ENCODE measurements at regions of chr2 and their contacts with region 1.

Region 1: GRCh38 chr2:25991965-25992364 is 9.7 kb upstream of the KIF3C start:
- DNase-seq: no peak
- ATAC-seq: peak; percentile 47
- H3K4me3 ChIP-seq: no peak overlapping the region
- H3K27ac ChIP-seq: no peak overlapping the region
- H3K4me1 ChIP-seq: peaks cover 37% of the 10 kb centered on the region
- H3K27me3 ChIP-seq: peaks cover 0 to 1% of the 10 kb centered on the region in 2 experiments; a peak in 1 of 5 replicates
- CTCF ChIP-seq: no peak
- EP300 ChIP-seq: no peak
- POLR2A ChIP-seq: no peak
- RAD21 ChIP-seq: no peak

Region 2: GRCh38 chr2:26072925-26073768 is 81.2 kb after region 1 on chr2:
- CTCF ChIA-PET with region 1: no interaction called
- POLR2A ChIA-PET with region 1: no interaction called
- in situ Hi-C with region 1: no loop called
- intact Hi-C with region 1: loop called (anchors 10 kb)
- DNase-seq: peak; percentile 41
- ATAC-seq: peak; percentile 80
- H3K4me3 ChIP-seq: no peak overlapping the region
- H3K27ac ChIP-seq: peak overlapping the region; percentile 7
- H3K4me1 ChIP-seq: peaks cover 62% of the 10 kb centered on the region
- H3K27me3 ChIP-seq: no peaks in the 10 kb centered on the region
- CTCF ChIP-seq: no peak
- EP300 ChIP-seq: no peak
- POLR2A ChIP-seq: no peak
- RAD21 ChIP-seq: no peak

Region 3: DNA sequence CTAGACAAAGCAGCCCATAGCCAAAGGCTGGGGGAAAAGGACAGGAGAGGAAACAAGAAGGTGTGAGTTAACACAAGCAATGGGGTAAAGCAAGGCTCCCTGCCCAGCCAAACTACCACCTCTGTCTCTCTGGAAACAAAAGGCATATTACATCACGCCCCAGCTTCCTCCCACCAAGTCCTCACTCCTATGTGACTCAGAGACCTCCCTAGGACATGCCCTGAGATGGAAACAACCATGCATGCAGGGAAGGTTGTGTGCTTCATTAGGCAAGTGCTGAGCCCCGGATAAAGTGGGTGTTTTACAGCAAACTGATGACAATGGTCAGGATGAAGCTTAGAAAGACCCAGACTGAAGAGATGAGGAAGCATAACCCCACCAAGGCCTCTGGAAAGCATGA is 1210.9 kb after region 1 on chr2:
- CTCF ChIA-PET with region 1: no interaction called
- POLR2A ChIA-PET with region 1: no interaction called
- in situ Hi-C with region 1: no loop called
- intact Hi-C with region 1: no loop called
- DNase-seq: no peak
- ATAC-seq: no peak
- H3K4me3 ChIP-seq: no peak overlapping the region
- H3K27ac ChIP-seq: no peak overlapping the region
- H3K4me1 ChIP-seq: peaks cover 16% of the 10 kb centered on the region
- H3K27me3 ChIP-seq: no peaks in the 10 kb centered on the region
- CTCF ChIP-seq: no peak
- EP300 ChIP-seq: no peak
- POLR2A ChIP-seq: no peak
- RAD21 ChIP-seq: no peak

Measured in HepG2 (cell line).